Activated CD8-positive, alpha-beta T cell treated with anti-CD3 and anti-CD28 coated beads, Interleukin-2, amount 10 ng/mL, durations not matched to agents 7 days and 5 days (primary cell): ENCODE measurements at regions of chr16 and their contacts with region 1.

Region 1: DNA sequence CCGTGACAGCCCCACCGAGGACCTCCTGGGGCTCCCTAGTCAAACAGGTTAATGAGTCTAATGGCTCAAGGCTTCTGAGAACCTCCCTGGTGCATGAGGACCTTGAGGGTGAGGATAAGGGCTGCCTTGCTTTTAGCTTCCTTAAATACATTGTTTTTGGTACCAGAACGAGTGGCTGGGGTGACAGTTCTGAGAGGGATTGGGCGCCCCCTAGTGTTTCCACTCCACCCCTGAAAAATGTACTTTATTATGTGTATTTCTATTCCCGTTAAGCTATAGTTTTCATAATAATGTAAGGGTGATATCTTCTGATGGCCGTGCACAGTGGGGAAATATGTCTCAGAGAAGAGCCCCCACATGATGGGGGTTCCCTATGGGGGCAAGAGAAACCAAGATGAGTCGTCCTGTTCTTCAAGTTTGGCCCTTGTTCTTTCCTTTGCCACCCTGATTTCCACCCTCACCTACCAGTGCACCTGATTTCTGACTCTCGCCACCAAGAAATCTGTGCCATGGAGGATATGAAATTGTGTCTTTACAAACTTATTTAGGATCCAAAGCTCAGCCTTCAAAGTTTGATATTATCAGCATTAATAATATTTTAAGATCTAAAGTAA is 14.5 kb upstream of the VWA3A start:
- DNase-seq: peak; percentile 82
- ATAC-seq: peak; percentile 64
- H3K4me3 Mint-ChIP-seq: no peak overlapping the region
- H3K27ac Mint-ChIP-seq: no peak overlapping the region
- H3K4me1 Mint-ChIP-seq: no peaks in the 10 kb centered on the region
- H3K27me3 Mint-ChIP-seq: no peaks in the 10 kb centered on the region

Region 2: DNA sequence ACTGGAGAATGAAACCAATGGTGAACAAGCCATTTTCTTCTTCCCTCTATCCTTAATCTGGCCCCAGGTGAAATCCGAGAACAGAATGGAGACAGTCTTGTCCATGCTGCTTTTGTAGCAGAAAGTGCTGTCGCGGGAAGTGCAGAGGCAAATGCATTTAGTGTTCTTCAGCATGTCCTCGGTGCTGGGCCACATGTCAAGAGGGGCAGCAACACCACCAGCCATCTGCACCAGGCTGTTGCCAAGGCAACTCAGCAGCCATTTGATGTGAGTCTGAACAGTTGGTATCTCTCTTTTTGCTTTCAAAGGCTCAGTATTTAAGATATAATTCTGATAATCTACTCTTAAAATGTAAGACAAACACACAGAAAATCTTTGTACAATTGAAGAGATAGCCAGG is 106.0 kb before region 1 on chr16:
- CTCF ChIA-PET with region 1: interaction called, 12 read pairs
- POLR2A ChIA-PET with region 1: no interaction called
- DNase-seq: no peak
- ATAC-seq: no peak
- H3K4me3 Mint-ChIP-seq: no peak overlapping the region
- H3K27ac Mint-ChIP-seq: no peak overlapping the region
- H3K4me1 Mint-ChIP-seq: no peaks in the 10 kb centered on the region
- H3K27me3 Mint-ChIP-seq: no peaks in the 10 kb centered on the region

Region 3: DNA sequence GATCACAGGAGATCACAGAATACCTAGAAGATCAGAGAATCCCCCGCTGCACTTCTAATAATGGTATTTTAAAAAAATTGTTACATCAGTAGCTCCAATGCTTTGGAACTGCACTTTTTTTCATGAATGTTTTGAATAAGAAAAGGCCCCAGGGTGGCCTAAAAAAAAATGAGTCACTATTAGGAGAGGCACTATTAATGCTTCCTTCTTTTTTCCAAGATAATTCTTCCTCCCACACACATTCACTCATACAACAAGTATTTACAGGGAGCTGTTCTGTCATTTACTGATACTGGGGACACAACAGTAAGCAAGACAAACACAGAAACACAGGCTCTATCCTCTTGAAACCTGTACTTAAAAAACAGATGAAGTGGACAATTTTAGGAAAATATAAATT is 76.2 kb before region 1 on chr16:
- CTCF ChIA-PET with region 1: interaction called, 246 read pairs
- POLR2A ChIA-PET with region 1: interaction called, 3 read pairs
- DNase-seq: no peak
- ATAC-seq: no peak
- H3K4me3 Mint-ChIP-seq: no peak overlapping the region
- H3K27ac Mint-ChIP-seq: no peak overlapping the region
- H3K4me1 Mint-ChIP-seq: peaks cover 11% of the 10 kb centered on the region
- H3K27me3 Mint-ChIP-seq: no peaks in the 10 kb centered on the region

Region 4: DNA sequence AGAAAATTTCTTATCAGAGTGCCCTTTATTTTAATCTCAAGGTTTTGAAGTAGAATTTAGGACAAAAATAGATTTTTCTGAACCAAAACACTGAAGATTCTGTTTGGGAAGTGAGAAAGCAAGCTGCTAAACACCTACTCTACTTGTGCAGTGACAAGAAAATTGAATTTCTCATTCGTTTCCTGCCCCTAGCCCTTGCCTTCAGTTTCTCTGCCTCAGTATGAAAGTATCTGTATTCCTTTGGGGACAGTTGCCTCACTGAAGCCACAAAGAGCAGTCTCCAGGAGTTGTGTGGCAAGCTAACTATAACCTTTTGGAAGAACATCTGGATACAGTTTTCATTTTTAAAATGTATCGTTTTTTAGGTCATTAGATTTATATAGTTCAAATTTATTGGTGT is 50.2 kb before region 1 on chr16:
- CTCF ChIA-PET with region 1: interaction called, 21 read pairs
- POLR2A ChIA-PET with region 1: no interaction called
- DNase-seq: no peak
- ATAC-seq: no peak
- H3K4me3 Mint-ChIP-seq: no peak overlapping the region
- H3K27ac Mint-ChIP-seq: no peak overlapping the region
- H3K4me1 Mint-ChIP-seq: peaks cover 12% of the 10 kb centered on the region
- H3K27me3 Mint-ChIP-seq: no peaks in the 10 kb centered on the region

Region 5: DNA sequence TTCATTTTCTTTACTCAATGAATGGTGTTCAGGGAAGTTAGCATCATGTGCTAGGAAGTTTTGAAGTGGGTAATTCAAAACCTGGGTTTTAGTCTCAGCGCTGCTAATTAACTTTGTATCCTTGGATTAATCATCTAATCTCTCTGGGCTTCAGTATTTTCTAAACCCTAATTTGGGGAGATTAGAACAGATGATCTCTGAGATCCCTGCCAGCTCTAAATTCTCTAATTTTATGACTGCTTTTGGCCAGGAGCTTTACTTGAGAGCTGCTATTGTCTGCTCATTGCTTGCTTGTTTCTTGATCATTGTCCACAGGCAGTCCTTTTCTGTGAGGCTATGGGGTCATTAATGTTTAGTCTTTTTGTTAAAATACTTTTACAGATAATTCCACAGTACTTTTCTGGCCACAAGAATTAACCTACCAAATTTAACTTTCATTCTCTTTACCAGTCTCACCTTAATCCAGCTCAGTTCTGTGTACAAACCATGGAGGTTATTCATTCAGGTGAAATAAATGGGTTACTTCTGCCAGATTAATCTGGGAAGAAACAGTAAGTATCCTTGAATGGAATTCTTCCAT is 13.8 kb before region 1 on chr16:
- CTCF ChIA-PET with region 1: interaction called, 49 read pairs
- POLR2A ChIA-PET with region 1: no interaction called
- DNase-seq: no peak
- ATAC-seq: no peak
- H3K4me3 Mint-ChIP-seq: no peak overlapping the region
- H3K27ac Mint-ChIP-seq: no peak overlapping the region
- H3K4me1 Mint-ChIP-seq: no peaks in the 10 kb centered on the region
- H3K27me3 Mint-ChIP-seq: no peaks in the 10 kb centered on the region

Region 6: GRCh38 chr16:22109258-22109898 is 31.6 kb after region 1 on chr16:
- CTCF ChIA-PET with region 1: interaction called, 17 read pairs
- POLR2A ChIA-PET with region 1: no interaction called
- DNase-seq: no peak
- ATAC-seq: no peak
- H3K4me3 Mint-ChIP-seq: no peak overlapping the region
- H3K27ac Mint-ChIP-seq: no peak overlapping the region
- H3K4me1 Mint-ChIP-seq: peaks cover 8% of the 10 kb centered on the region
- H3K27me3 Mint-ChIP-seq: peaks cover 24% of the 10 kb centered on the region